Dendritic cell treated with granulocyte-macrophage colony-stimulating factor and Interleukin-4, amounts not matched to agents 40 ng/mL and 50 ng/mL, for 4 days (primary cell): ENCODE measurements at regions of chr19 and their contacts with region 1.

Region 1: GRCh38 chr19:56393119-56394012 is at the start of gene ZNF582:
- H3K4me3 Mint-ChIP-seq: peak within 1 kb of the TSS; percentile 82
- H3K27ac Mint-ChIP-seq: peak within 1 kb of the TSS; percentile 87
- H3K4me1 Mint-ChIP-seq: peaks cover 10% of the 10 kb centered on the region
- H3K27me3 Mint-ChIP-seq: peaks cover 1% of the 10 kb centered on the region

Region 2: DNA sequence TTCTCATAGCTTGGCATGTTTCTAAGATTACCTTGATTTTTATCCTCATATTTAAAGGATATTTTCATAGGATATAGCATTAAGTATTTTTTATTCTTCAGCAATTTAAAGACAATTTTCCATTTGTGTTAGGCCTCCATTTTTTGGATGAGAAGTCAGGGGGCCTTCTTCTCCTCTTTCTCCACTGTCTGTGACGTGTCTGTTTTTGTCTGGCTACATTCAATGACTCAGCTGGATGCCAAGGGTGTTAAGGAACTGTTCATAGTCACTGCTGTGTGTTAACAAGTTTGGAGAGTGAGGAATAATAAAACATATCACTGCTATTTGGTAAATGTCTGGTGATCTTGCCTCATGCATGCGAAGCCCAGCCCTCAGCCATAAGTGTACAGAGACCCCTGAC is 36.4 kb before region 1 on chr19:
- intact Hi-C with region 1: no loop called
- H3K4me3 Mint-ChIP-seq: no peak overlapping the region
- H3K27ac Mint-ChIP-seq: no peak overlapping the region
- H3K4me1 Mint-ChIP-seq: no peaks in the 10 kb centered on the region
- H3K27me3 Mint-ChIP-seq: no peaks in the 10 kb centered on the region

Region 3: GRCh38 chr19:56403764-56404704 is 10.7 kb after region 1 on chr19 and contains the start of gene ZNF583:
- intact Hi-C with region 1: loop called (anchors 1 kb)
- H3K4me3 Mint-ChIP-seq: peak within 1 kb of the TSS; percentile 76
- H3K27ac Mint-ChIP-seq: peak within 1 kb of the TSS; percentile 98
- H3K4me1 Mint-ChIP-seq: peaks cover 15% of the 10 kb centered on the region
- H3K27me3 Mint-ChIP-seq: no peaks in the 10 kb centered on the region

Region 4: DNA sequence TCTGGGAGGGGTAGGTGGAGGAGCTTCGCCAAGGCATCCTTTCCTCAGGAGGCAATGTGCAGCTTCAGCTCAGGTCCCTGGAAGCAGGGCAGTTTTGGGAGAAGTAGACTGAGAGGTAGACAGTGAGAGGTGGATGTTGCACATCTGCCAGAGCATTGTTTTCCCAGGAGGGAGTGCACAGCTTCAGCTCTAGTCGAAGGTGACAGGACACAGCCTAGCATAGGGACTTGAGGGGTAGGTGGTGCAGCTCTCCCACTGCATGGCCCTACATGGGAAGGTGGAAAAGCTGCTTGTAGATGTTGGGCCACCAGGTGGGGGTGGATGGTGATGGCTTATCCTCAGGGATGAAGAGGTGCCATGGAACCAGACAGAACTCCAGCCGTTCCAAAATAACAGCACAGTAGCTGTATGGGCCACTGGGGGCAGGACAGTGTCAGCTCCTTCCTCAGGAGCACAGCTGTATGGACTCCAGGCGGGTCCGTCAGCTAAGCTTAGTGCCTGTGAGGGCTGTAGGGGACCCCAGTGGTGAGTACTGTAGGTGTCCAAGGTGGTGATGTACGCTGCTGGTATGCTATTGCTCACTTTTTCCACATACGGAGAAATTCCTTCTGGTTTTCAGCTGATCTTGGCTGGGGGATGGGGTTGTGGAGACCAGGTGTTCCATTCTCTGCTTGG is 909.5 kb after region 1 on chr19:
- intact Hi-C with region 1: no loop called
- H3K4me3 Mint-ChIP-seq: no peak overlapping the region
- H3K27ac Mint-ChIP-seq: no peak overlapping the region
- H3K4me1 Mint-ChIP-seq: peaks cover 5% of the 10 kb centered on the region
- H3K27me3 Mint-ChIP-seq: no peaks in the 10 kb centered on the region